Natural killer cell (primary cell): ENCODE measurements at regions of chr1 and their contacts with region 1.

Region 1: DNA sequence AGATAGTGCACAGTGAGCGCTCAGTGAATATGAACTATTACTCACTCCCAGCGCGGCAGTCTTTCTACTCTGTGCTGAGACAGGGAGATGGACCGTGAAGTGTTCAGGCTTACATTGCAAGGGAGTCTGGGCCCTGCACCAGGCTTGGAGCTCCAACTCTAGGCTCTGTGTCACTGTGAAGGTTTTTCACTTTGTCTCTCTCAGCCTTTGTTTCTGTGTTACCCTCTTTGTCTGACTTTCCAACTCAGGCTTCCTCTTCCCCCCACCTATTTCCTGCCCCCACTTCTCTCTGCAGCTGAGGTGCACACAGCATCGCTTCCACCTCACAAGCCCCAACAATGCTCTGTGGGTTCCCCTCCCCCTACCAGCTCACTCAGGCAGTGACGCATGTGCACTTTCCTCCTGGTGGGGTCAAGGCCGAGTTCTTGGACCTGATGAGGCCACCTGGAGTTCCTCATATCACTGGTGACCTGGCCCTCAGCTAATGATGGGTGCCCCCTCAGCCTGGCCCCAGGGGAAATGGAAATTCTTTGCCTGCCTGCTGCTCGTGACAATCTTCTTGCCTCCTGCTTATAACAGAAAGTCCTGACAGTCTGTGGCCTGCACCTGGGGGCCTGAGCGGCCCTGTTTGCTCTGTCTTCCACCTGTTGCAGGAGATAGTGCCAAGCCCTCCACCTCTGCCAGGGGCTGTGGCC is 1.1 kb upstream of the LCK start:
- DNase-seq: peak; percentile 72 to 94
- ATAC-seq: peak; percentile 72 to 85 (median 82)
- H3K4me3 ChIP-seq: peak overlapping the region; percentile 4
- H3K4me3 Mint-ChIP-seq: peak overlapping the region; percentile 100
- H3K27ac ChIP-seq: peak overlapping the region; percentile 86
- H3K27ac Mint-ChIP-seq: peak overlapping the region; percentile 93 to 96
- H3K4me1 ChIP-seq: peaks cover 79% of the 10 kb centered on the region
- H3K4me1 Mint-ChIP-seq: peaks cover 56 to 71% of the 10 kb centered on the region in 2 donors
- H3K27me3 ChIP-seq: no peaks in the 10 kb centered on the region
- H3K27me3 Mint-ChIP-seq: no peaks in the 10 kb centered on the region
- CTCF ChIP-seq: no peak

Region 2: GRCh38 chr1:32151319-32151787 is 98.6 kb before region 1 on chr1:
- intact Hi-C with region 1: no loop called
- DNase-seq: no peak
- ATAC-seq: no peak
- H3K4me3 ChIP-seq: no peak overlapping the region
- H3K4me3 Mint-ChIP-seq: no peak overlapping the region
- H3K27ac ChIP-seq: no peak overlapping the region
- H3K27ac Mint-ChIP-seq: peak overlapping the region in 1 of 2 donors; percentile 19
- H3K4me1 ChIP-seq: no peaks in the 10 kb centered on the region
- H3K4me1 Mint-ChIP-seq: peaks cover 12 to 21% of the 10 kb centered on the region in 2 donors
- H3K27me3 ChIP-seq: no peaks in the 10 kb centered on the region
- H3K27me3 Mint-ChIP-seq: no peaks in the 10 kb centered on the region
- CTCF ChIP-seq: no peak

Region 3: GRCh38 chr1:32263744-32264143 is 13.8 kb after region 1 on chr1:
- intact Hi-C with region 1: loop called (anchors 2 kb)
- DNase-seq: peak in 1 of 2 donors; percentile 61
- ATAC-seq: peak; percentile 31 to 52 (median 46)
- H3K4me3 ChIP-seq: no peak overlapping the region
- H3K4me3 Mint-ChIP-seq: peak overlapping the region; percentile 31
- H3K27ac ChIP-seq: peak overlapping the region; percentile 43
- H3K27ac Mint-ChIP-seq: peak overlapping the region; percentile 53 to 70
- H3K4me1 ChIP-seq: peaks cover 68% of the 10 kb centered on the region
- H3K4me1 Mint-ChIP-seq: peaks cover 31 to 39% of the 10 kb centered on the region in 2 donors
- H3K27me3 ChIP-seq: no peaks in the 10 kb centered on the region
- H3K27me3 Mint-ChIP-seq: no peaks in the 10 kb centered on the region
- CTCF ChIP-seq: no peak

Region 4: DNA sequence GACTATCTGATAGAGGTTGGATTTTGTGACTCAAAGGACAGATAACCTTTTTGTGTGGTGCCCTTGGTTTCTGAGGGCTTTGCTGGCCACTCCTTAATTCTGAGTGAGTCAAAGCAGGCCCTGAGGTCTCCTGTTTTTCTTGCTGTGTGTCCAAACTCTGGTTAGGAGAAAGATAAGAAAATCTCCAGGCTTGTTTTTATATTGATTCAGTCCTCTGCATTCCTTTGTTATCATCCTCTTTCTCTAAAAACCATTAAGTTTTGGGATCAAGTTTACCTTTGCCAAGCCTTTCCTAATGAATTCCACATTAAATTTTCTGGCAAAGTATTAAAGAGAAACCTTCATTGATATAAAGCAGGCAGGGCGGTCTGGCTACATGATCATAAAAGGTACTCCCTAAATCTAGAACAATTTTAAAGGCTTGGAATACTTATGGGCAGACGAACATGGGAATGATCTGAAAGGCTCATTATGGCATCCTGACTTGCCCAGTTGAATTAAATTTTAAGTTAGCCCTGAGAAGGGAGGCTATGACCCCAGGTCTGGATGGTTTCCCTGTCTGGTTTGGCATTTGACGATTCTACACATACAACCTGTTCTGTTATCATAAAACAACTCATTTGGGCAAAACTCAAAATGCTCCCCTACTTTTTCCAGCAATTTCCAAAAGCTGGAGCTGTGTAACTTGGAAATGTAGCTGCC is 235.7 kb after region 1 on chr1:
- intact Hi-C with region 1: no loop called
- DNase-seq: no peak
- ATAC-seq: no peak
- H3K4me3 ChIP-seq: no peak overlapping the region
- H3K4me3 Mint-ChIP-seq: no peak overlapping the region
- H3K27ac ChIP-seq: no peak overlapping the region
- H3K27ac Mint-ChIP-seq: no peak overlapping the region
- H3K4me1 ChIP-seq: no peaks in the 10 kb centered on the region
- H3K4me1 Mint-ChIP-seq: no peaks in the 10 kb centered on the region
- H3K27me3 ChIP-seq: no peaks in the 10 kb centered on the region
- H3K27me3 Mint-ChIP-seq: peaks cover 0 to 5% of the 10 kb centered on the region in 2 donors
- CTCF ChIP-seq: no peak